ENCODE measurements at regions of chr15 and their contacts with region 1.

Region 1: GRCh38 chr15:79184465-79184892 is 93.9 kb upstream of the RASGRF1 start:
- DNase-seq: peak; percentile 32 to 77 (median 54)
- ATAC-seq: no peak
- H3K4me3 ChIP-seq: no peak overlapping the region
- H3K4me3 Mint-ChIP-seq: no peak overlapping the region
- H3K27ac ChIP-seq: no peak overlapping the region
- H3K27ac Mint-ChIP-seq: no peak overlapping the region
- H3K4me1 ChIP-seq: no peaks in the 10 kb centered on the region
- H3K4me1 Mint-ChIP-seq: no peaks in the 10 kb centered on the region
- H3K27me3 ChIP-seq: peaks cover 0 to 2% of the 10 kb centered on the region in 2 experiments
- H3K27me3 Mint-ChIP-seq: peaks cover 11% of the 10 kb centered on the region
- CTCF ChIP-seq: peak; percentile 93

Region 2: GRCh38 chr15:78618490-78618934 is 566.0 kb before region 1 on chr15:
- CTCF ChIA-PET with region 1: no interaction called
- POLR2A ChIA-PET with region 1: no interaction called
- intact Hi-C with region 1: loop called in 1 of 2 experiments (anchors 2 kb)
- DNase-seq: peak; percentile 55 to 86 (median 74)
- ATAC-seq: peak; percentile 32
- H3K4me3 ChIP-seq: no peak overlapping the region
- H3K4me3 Mint-ChIP-seq: no peak overlapping the region
- H3K27ac ChIP-seq: no peak overlapping the region
- H3K27ac Mint-ChIP-seq: no peak overlapping the region
- H3K4me1 ChIP-seq: peaks cover 11% of the 10 kb centered on the region
- H3K4me1 Mint-ChIP-seq: peaks cover 18% of the 10 kb centered on the region
- H3K27me3 ChIP-seq: peaks cover 24 to 37% of the 10 kb centered on the region in 2 experiments
- H3K27me3 Mint-ChIP-seq: peaks cover 45% of the 10 kb centered on the region
- CTCF ChIP-seq: peak; percentile 74

Region 3: DNA sequence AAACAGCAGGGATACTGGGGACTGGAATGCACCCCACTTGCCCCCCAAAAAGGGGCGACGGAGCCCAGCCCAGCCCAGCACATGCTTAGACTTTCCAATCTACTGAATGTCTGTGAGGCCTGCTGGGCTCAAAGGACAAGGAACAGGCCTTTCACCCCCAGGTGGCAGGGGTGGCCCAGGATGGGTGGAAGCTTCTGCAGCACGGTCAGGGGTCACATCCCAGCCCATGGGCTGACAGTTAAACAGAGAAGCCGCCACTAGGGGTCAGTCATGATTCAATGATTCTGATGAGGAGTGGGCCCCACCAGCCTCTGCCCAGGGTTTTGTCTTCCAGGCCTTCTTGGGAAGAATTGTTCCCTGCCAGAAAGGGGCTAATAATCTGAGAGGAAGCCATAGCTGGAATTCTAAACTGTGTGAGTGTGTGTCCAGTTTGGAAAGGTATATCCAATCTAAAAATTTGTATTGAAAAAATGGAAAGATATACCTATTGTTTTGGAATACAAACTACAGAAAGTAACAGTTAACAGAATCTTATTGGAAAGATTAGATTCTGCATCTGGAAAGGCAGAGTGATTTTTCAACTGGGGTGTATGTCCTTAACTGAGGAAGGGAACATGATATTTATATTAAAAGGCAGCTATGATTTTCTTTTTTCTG is 545.7 kb before region 1 on chr15:
- CTCF ChIA-PET with region 1: no interaction called
- POLR2A ChIA-PET with region 1: no interaction called
- intact Hi-C with region 1: loop called in 1 of 2 experiments (anchors 5 kb)
- DNase-seq: peak in 12 of 14 experiments; percentile 10 to 63 (median 20)
- ATAC-seq: peak; percentile 54
- H3K4me3 ChIP-seq: no peak overlapping the region
- H3K4me3 Mint-ChIP-seq: peak overlapping the region; percentile 35
- H3K27ac ChIP-seq: no peak overlapping the region
- H3K27ac Mint-ChIP-seq: no peak overlapping the region
- H3K4me1 ChIP-seq: peaks cover 19% of the 10 kb centered on the region
- H3K4me1 Mint-ChIP-seq: peaks cover 13% of the 10 kb centered on the region
- H3K27me3 ChIP-seq: peaks cover 5 to 25% of the 10 kb centered on the region in 2 experiments
- H3K27me3 Mint-ChIP-seq: peaks cover 22% of the 10 kb centered on the region
- CTCF ChIP-seq: peak; percentile 61

Region 4: GRCh38 chr15:78750566-78750965 is 433.9 kb before region 1 on chr15:
- CTCF ChIA-PET with region 1: no interaction called
- POLR2A ChIA-PET with region 1: no interaction called
- intact Hi-C with region 1: loop called (anchors 5 to 10 kb)
- DNase-seq: no peak
- ATAC-seq: no peak
- H3K4me3 ChIP-seq: no peak overlapping the region
- H3K4me3 Mint-ChIP-seq: peak overlapping the region; percentile 7
- H3K27ac ChIP-seq: no peak overlapping the region
- H3K27ac Mint-ChIP-seq: no peak overlapping the region
- H3K4me1 ChIP-seq: peaks cover 10% of the 10 kb centered on the region
- H3K4me1 Mint-ChIP-seq: peaks cover 9% of the 10 kb centered on the region
- H3K27me3 ChIP-seq: no peaks in the 10 kb centered on the region
- H3K27me3 Mint-ChIP-seq: no peaks in the 10 kb centered on the region
- CTCF ChIP-seq: no peak

Region 5: GRCh38 chr15:78859971-78860732 is 324.3 kb before region 1 on chr15:
- CTCF ChIA-PET with region 1: no interaction called
- POLR2A ChIA-PET with region 1: no interaction called
- intact Hi-C with region 1: loop called in 1 of 2 experiments (anchors 2 kb)
- DNase-seq: peak; percentile 40 to 82 (median 50)
- ATAC-seq: peak; percentile 74
- H3K4me3 ChIP-seq: peak overlapping the region; percentile 54
- H3K4me3 Mint-ChIP-seq: peak overlapping the region; percentile 86
- H3K27ac ChIP-seq: no peak overlapping the region
- H3K27ac Mint-ChIP-seq: peak overlapping the region; percentile 91
- H3K4me1 ChIP-seq: peaks cover 10% of the 10 kb centered on the region
- H3K4me1 Mint-ChIP-seq: peaks cover 14% of the 10 kb centered on the region
- H3K27me3 ChIP-seq: no peaks in the 10 kb centered on the region
- H3K27me3 Mint-ChIP-seq: peaks cover 3% of the 10 kb centered on the region
- CTCF ChIP-seq: peak; percentile 55

Region 6: GRCh38 chr15:78909791-78910228 is 274.7 kb before region 1 on chr15:
- CTCF ChIA-PET with region 1: interaction called, 6 read pairs
- POLR2A ChIA-PET with region 1: no interaction called
- intact Hi-C with region 1: loop called in 1 of 2 experiments (anchors 5 kb)
- DNase-seq: peak in 4 of 14 experiments; percentile 19 to 68 (median 51)
- ATAC-seq: peak; percentile 52
- H3K4me3 ChIP-seq: no peak overlapping the region
- H3K4me3 Mint-ChIP-seq: no peak overlapping the region
- H3K27ac ChIP-seq: no peak overlapping the region
- H3K27ac Mint-ChIP-seq: peak overlapping the region; percentile 10
- H3K4me1 ChIP-seq: peaks cover 13% of the 10 kb centered on the region
- H3K4me1 Mint-ChIP-seq: peaks cover 31% of the 10 kb centered on the region
- H3K27me3 ChIP-seq: no peaks in the 10 kb centered on the region
- H3K27me3 Mint-ChIP-seq: no peaks in the 10 kb centered on the region
- CTCF ChIP-seq: peak; percentile 41

Region 7: GRCh38 chr15:79154483-79155135 is 29.9 kb before region 1 on chr15:
- CTCF ChIA-PET with region 1: no interaction called
- POLR2A ChIA-PET with region 1: no interaction called
- intact Hi-C with region 1: no loop called
- DNase-seq: no peak
- ATAC-seq: no peak
- H3K4me3 ChIP-seq: no peak overlapping the region
- H3K4me3 Mint-ChIP-seq: no peak overlapping the region
- H3K27ac ChIP-seq: no peak overlapping the region
- H3K27ac Mint-ChIP-seq: no peak overlapping the region
- H3K4me1 ChIP-seq: no peaks in the 10 kb centered on the region
- H3K4me1 Mint-ChIP-seq: no peaks in the 10 kb centered on the region
- H3K27me3 ChIP-seq: peaks cover 0 to 4% of the 10 kb centered on the region in 2 experiments
- H3K27me3 Mint-ChIP-seq: peaks cover 15% of the 10 kb centered on the region
- CTCF ChIP-seq: no peak

Region 8: DNA sequence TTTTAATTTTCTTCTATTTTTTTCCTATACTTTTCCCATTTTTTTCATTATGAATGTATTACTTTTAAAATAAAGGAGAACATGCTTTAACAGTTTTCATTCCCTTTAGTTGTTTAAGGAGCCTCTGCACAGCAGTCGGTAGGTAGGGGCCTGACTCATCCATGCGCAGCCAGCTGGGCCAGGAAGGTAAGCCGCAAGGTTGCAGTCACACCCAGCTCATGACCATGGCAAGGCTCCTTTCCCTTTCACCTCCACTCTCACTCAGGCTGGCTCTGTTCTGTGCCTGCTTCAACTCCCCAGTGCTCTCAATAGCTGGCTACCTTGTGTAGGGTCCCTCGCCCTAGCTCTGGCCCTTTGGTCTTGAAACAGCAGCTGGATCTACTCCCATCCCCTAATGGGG is 80.7 kb after region 1 on chr15:
- CTCF ChIA-PET with region 1: no interaction called
- POLR2A ChIA-PET with region 1: no interaction called
- intact Hi-C with region 1: no loop called
- DNase-seq: no peak
- ATAC-seq: no peak
- H3K4me3 ChIP-seq: no peak overlapping the region
- H3K4me3 Mint-ChIP-seq: no peak overlapping the region
- H3K27ac ChIP-seq: no peak overlapping the region
- H3K27ac Mint-ChIP-seq: no peak overlapping the region
- H3K4me1 ChIP-seq: no peaks in the 10 kb centered on the region
- H3K4me1 Mint-ChIP-seq: no peaks in the 10 kb centered on the region
- H3K27me3 ChIP-seq: peaks cover 2 to 29% of the 10 kb centered on the region in 2 experiments
- H3K27me3 Mint-ChIP-seq: peaks cover 50% of the 10 kb centered on the region
- CTCF ChIP-seq: no peak

Measured in CD4-positive, alpha-beta T cell (primary cell).